CD8-positive, alpha-beta memory T cell (primary cell): ENCODE measurements at regions of chr2 and their contacts with region 1.

Region 1: DNA sequence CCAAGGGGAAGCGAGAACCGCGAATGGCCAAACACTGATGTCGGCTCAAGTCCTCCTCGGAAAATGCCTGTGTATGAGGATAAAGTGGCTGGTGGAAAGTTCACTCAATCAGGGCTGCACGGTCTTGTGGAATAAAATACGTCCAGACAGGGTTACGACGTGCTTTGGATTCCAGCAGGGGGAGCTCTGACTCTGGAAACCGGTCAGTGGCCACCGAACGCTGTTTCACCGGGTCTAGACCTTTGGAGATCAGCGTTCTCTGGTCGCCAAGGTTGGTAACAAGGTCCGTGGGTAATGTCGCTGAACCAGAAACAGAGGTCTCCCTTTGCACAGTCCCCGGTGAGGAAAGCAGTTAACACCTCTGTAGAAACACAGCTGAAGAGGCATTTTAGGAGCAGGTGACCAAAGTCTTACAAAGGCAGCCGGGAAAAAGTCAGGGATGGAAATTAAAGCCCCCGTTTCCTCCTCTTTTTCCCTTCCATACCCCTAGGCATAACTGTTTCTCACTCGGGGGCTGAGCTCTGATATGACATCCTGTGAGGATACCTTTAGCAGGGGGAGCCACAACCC is 47.8 kb downstream of the CDCA7 start:
- DNase-seq: peak; percentile 47 to 75 (median 57)
- H3K4me3 ChIP-seq: no peak overlapping the region
- H3K4me3 Mint-ChIP-seq: no peak overlapping the region
- H3K27ac ChIP-seq: no peak overlapping the region
- H3K27ac Mint-ChIP-seq: peak overlapping the region in 1 of 8 donors; percentile 40
- H3K4me1 ChIP-seq: no peaks in the 10 kb centered on the region
- H3K4me1 Mint-ChIP-seq: peaks cover 4 to 9% (median 7%) of the 10 kb centered on the region in 3 donors
- H3K27me3 ChIP-seq: peaks cover 27% of the 10 kb centered on the region
- H3K27me3 Mint-ChIP-seq: peaks cover 38 to 77% of the 10 kb centered on the region in 2 donors

Region 2: DNA sequence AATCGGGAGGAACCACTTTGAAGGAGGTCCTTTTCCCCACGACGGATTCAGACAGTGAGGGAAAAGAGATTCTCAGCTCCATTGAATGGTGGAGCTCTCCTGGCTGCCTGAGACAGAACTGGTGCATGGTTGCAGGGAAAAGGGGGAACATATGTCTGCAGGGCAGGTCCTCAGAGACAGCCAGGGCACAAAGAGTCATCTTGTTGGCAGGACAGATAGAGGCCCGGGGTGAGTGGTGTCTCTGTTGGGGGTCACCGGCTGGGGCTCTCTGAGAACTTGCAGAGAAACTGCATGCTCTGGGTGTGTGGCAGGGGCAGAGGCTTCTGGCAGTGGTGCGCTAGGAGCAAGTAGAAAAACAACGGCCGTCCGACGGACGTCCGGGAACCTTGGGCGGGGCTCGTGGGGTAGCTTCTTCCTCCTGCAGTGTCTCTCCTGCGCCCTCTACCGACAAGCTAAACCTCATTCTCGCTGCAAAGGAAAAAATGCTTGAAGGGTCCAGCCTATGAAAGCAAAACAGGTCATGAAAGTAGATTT is 46.5 kb after region 1 on chr2:
- CTCF ChIA-PET with region 1: interaction called, 16 read pairs
- POLR2A ChIA-PET with region 1: no interaction called
- DNase-seq: peak; percentile 25 to 68 (median 51)
- H3K4me3 ChIP-seq: no peak overlapping the region
- H3K4me3 Mint-ChIP-seq: peak overlapping the region in 6 of 7 donors; percentile 69 to 84 (median 76)
- H3K27ac ChIP-seq: no peak overlapping the region
- H3K27ac Mint-ChIP-seq: peak overlapping the region in 2 of 8 donors; percentile 15 to 17
- H3K4me1 ChIP-seq: no peaks in the 10 kb centered on the region
- H3K4me1 Mint-ChIP-seq: peaks cover 17 to 22% (median 19%) of the 10 kb centered on the region in 3 donors
- H3K27me3 ChIP-seq: no peaks in the 10 kb centered on the region
- H3K27me3 Mint-ChIP-seq: peaks cover 3 to 24% of the 10 kb centered on the region in 2 donors